A549 (cell line): ENCODE measurements at regions of chr10 and their contacts with region 1.

Region 1: DNA sequence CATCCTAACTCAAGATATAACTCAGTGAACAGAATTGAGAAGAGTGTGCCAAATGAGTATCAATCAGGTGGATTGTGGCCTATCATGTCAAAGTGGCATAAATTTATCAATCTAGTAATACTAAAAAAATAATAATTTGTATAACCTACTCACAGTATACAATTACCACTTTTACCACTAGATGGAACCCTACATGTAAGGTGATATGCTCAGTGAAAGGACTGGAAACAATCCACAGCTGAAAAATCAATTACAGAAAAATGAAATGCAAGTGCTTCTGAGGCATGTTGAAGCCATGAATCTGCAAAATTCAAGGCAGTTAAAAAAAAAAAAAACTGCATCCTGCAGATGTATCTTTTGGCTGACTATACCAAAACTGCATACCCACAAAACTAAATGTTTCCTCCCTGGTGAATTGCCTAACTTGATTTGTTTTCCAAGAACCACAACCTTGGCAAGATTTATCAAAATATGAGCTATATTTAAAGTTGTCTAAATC is 13.9 kb downstream of the ARHGAP19 start:
- DNase-seq: peak; percentile 69 to 70
- ATAC-seq: peak; percentile 86 to 92
- H3K4me3 ChIP-seq: no peak overlapping the region
- H3K27ac ChIP-seq: peak overlapping the region; percentile 15 to 65; a peak in 4 of 6 replicates
- H3K4me1 ChIP-seq: peaks cover 21% of the 10 kb centered on the region
- CTCF ChIP-seq: peak; percentile 78
- EP300 ChIP-seq: no peak
- POLR2A ChIP-seq: no peak
- RAD21 ChIP-seq: peak; percentile 62 to 70

Region 2: DNA sequence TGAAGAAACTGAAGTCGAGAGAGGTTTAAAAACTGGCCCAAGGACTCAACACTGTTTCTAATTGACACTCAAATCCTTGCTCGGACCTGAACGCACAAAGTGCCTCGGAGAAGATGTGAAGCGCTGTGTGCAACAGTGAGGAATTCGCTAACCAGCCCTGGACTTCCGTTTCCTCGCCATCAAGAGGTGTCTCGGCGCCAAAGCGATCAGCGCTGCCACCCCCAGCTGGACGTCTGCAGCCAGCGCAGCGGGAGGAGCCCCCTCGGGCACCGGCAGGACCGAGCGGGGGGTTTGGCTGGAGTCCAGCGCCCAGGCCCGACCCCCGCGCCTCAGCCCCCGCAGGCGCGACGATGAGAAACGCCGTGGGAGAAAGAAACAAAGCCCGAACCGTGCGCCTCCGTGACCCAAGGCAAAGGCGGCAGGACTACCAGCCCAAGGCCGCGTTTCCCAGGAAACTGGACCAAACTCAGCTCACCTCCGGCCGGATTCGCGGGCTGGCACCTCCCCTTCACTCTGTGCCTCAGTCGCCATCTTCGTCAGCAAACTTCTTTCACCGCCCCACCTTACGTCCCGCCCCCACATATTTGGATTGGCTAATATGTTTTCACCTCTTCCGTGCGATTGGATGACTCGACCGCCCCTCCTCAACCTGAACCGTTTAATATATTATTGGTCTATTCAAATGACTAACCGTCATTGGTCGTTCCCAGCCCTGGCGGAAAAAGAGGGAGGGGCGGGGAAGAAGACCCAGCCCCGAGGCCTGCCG is 13.7 kb after region 1 on chr10 and contains the start of gene ARHGAP19:
- CTCF ChIA-PET with region 1: interaction called, 28 read pairs
- POLR2A ChIA-PET with region 1: interaction called, 4 read pairs
- DNase-seq: peak; percentile 97 to 99
- ATAC-seq: peak; percentile 96 to 97
- H3K4me3 ChIP-seq: peak within 1 kb of the TSS; percentile 57
- H3K27ac ChIP-seq: peak within 1 kb of the TSS; percentile 84 to 96
- H3K4me1 ChIP-seq: peaks cover 12% of the 10 kb centered on the region
- CTCF ChIP-seq: peak; percentile 14; the same call in 1 of the 3 replicates
- EP300 ChIP-seq: no peak
- POLR2A ChIP-seq: peak; percentile 72
- RAD21 ChIP-seq: no peak
- polyA plus RNA-seq, gene ARHGAP19: 11.9 and 13.9 TPM in 2 replicates

Region 3: DNA sequence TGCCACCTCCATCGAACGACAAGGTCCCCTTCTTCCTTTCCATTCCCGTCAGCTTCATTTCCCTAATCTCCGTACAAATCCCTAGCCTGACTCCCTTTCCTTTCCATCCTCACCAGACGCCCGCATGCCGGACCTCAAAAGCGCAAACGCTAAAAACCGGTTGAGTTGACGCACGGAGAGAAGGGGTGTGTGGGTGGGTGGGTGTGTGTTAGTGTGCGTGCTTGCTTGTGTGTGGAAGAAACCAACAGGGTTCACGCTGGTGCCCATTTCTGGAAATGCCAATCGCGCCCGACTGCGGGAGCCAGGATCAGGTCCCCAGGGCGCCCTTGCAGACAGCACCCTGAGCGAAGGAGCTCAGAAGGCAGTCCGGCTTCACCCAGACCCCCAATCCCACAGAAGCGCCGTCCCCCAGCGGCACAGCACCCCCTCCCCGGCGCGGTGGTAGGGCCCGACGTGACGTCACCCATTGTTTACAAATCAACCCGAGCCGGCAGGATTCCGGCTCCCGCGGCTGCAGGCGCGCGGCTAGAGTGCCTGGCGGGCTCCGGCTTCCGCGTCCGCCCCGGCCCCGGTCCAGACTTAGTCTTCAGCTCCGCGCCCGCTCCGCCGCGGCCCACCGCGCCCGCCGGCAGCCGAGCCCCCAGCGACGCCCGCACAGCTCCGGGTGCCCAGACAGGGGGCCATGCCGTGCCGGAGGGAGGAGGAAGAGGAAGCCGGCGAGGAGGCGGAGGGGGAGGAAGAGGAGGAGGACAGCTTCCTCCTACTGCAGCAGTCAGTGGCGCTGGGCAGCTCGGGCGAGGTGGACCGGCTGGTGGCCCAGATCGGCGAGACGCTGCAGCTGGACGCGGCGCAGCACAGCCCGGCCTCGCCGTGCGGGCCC is 40.5 kb after region 1 on chr10 and contains the start of gene FRAT1:
- CTCF ChIA-PET with region 1: interaction called, 18 read pairs
- POLR2A ChIA-PET with region 1: interaction called, 4 read pairs
- DNase-seq: peak; percentile 82 to 91
- ATAC-seq: peak; percentile 86 to 88
- H3K4me3 ChIP-seq: peak within 1 kb of the TSS; percentile 58
- H3K27ac ChIP-seq: peak within 1 kb of the TSS; percentile 95 to 99
- H3K4me1 ChIP-seq: 0 out of 3 replicates have a peak, but pooled peaks cover 3% of the 10 kb centered on the region
- CTCF ChIP-seq: no peak
- EP300 ChIP-seq: no peak
- POLR2A ChIP-seq: peak; percentile 36
- RAD21 ChIP-seq: no peak
- polyA plus RNA-seq, gene FRAT1: 1.3 and 1.5 TPM in 2 replicates

Region 4: GRCh38 chr10:97334370-97335175 is 56.0 kb after region 1 on chr10 and contains the start of gene FRAT2:
- CTCF ChIA-PET with region 1: interaction called, 19 read pairs
- POLR2A ChIA-PET with region 1: no interaction called
- DNase-seq: peak; percentile 91 to 96
- ATAC-seq: peak; percentile 86 to 89
- H3K4me3 ChIP-seq: peak within 1 kb of the TSS; percentile 87
- H3K27ac ChIP-seq: peak within 1 kb of the TSS; percentile 95 to 97
- H3K4me1 ChIP-seq: peaks cover 31% of the 10 kb centered on the region
- CTCF ChIP-seq: no peak
- EP300 ChIP-seq: no peak
- POLR2A ChIP-seq: peak; percentile 32; the same call in 1 of the 2 replicates
- RAD21 ChIP-seq: no peak
- polyA plus RNA-seq, gene FRAT2: 4.1 and 4.4 TPM in 2 replicates

Region 5: GRCh38 chr10:97355571-97355975 is 77.0 kb after region 1 on chr10:
- CTCF ChIA-PET with region 1: interaction called, 43 read pairs
- POLR2A ChIA-PET with region 1: no interaction called
- DNase-seq: no peak
- ATAC-seq: peak in 1 of 2 experiments; percentile 30; a peak in 2 of 6 replicates
- H3K4me3 ChIP-seq: no peak overlapping the region
- H3K27ac ChIP-seq: no peak overlapping the region
- H3K4me1 ChIP-seq: no peaks in the 10 kb centered on the region
- CTCF ChIP-seq: peak; percentile 30
- EP300 ChIP-seq: no peak
- POLR2A ChIP-seq: no peak
- RAD21 ChIP-seq: peak; percentile 46 to 56; a peak in 4 of 5 replicates